PC-3 (cell line): ENCODE measurements at regions of chr21 and their contacts with region 1.

Region 1: DNA sequence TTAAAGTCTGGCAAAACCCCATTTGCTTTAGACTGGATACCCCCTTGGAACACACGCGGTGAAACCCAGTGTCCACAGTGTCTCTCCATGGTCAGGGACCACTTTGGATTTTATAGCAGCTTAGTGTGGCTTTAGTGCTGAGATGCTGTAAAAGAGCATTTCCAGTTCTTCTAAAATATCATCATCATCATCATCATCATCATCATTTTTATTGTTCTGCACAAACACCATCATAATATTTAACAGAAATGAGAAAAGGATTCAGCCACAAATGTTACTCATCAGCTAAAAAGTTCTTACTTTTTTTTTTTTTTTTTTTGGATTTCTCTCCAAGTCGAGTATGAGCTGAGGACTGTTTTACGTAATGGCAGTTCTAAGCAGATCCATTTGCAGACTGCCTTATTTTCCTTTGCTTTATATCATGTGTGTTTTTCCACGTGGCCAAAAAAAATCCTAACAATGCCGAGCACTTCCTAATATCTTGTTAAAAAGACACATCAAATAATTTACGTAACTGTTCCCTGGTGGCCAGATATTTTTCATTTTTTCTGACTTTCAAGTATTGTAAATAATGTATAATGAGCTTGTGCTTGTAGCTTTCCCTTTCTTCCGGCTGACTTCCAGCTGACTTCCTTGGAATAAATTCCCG is 62.8 kb downstream of the EVA1C start:
- DNase-seq: peak; percentile 52
- ATAC-seq: peak; percentile 52
- H3K4me3 ChIP-seq: peak overlapping the region; percentile 25; the same call in 1 of the 2 replicates
- H3K27ac ChIP-seq: peak overlapping the region; percentile 41
- H3K4me1 ChIP-seq: peaks cover 38% of the 10 kb centered on the region
- H3K27me3 ChIP-seq: no peaks in the 10 kb centered on the region
- CTCF ChIP-seq: no peak

Region 2: DNA sequence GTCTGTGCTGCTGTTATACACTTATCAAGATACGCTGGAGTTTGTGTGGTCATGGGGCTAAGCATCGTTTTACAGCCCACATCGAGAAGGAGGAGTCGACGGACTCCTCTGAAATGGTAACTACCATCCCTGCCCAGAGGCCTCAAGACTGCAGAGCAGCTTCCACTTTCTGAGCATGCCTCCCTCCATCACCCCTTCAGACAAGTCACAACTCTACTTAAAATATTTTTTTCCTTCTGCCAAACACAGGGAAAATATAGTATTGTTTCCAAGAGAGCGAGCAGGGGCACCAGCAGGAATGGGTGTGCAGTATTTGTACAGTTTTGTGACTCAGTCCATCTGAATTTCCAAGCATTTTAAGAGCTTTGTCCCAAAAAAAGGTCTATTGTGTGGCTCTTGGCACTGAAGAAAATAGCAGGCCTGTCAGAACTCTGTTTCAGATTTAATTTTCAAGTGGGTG is 48.7 kb before region 1 on chr21:
- CTCF ChIA-PET with region 1: interaction called, 3 read pairs
- POLR2A ChIA-PET with region 1: interaction called, 9 read pairs
- intact Hi-C with region 1: loop called (anchors 2 kb)
- DNase-seq: peak; percentile 86
- ATAC-seq: peak; percentile 81
- H3K4me3 ChIP-seq: peak overlapping the region; percentile 43
- H3K27ac ChIP-seq: peak overlapping the region; percentile 87
- H3K4me1 ChIP-seq: peaks cover 59% of the 10 kb centered on the region
- H3K27me3 ChIP-seq: no peaks in the 10 kb centered on the region
- CTCF ChIP-seq: no peak

Region 3: DNA sequence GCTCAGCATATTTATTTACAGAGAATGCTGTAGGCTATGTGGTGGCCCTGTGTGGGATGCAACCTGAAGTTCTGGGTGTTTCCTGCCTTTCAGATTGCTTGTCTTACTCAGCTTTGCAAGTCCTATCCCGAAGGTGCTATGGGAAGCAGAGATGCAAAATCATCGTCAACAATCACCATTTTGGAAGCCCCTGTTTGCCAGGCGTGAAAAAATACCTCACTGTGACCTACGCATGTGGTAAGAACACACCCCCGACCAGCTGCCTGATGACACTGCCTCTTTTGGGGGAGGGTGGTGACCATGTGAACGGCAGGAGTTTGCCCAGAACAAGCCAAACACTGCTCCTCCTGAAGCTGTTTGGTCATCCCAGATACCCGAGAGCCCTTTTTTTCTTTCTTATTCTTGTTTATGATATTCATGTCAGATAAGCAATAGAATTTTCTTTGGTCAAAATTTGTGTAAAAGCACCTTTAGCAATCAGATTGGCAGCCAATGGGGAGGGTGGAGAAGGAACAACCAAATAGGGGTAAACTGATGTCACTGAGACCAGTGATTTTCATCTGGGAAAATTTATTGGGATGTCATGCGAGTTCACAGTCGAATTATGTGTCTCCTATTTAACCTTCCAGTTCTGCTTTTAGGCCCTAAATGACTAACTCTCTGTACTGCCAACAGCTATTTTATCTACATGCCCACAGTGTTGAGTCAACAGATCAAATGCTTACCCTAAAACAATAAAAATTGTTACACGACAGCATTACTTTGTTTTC is 19.8 kb after region 1 on chr21:
- CTCF ChIA-PET with region 1: interaction called, 6 read pairs
- POLR2A ChIA-PET with region 1: interaction called, 16 read pairs
- intact Hi-C with region 1: loop called (anchors 2 kb)
- DNase-seq: peak; percentile 89
- ATAC-seq: peak; percentile 96
- H3K4me3 ChIP-seq: peak overlapping the region; percentile 10; the same call in 1 of the 2 replicates
- H3K27ac ChIP-seq: peak overlapping the region; percentile 94
- H3K4me1 ChIP-seq: peaks cover 34% of the 10 kb centered on the region
- H3K27me3 ChIP-seq: no peaks in the 10 kb centered on the region
- CTCF ChIP-seq: no peak

Region 4: DNA sequence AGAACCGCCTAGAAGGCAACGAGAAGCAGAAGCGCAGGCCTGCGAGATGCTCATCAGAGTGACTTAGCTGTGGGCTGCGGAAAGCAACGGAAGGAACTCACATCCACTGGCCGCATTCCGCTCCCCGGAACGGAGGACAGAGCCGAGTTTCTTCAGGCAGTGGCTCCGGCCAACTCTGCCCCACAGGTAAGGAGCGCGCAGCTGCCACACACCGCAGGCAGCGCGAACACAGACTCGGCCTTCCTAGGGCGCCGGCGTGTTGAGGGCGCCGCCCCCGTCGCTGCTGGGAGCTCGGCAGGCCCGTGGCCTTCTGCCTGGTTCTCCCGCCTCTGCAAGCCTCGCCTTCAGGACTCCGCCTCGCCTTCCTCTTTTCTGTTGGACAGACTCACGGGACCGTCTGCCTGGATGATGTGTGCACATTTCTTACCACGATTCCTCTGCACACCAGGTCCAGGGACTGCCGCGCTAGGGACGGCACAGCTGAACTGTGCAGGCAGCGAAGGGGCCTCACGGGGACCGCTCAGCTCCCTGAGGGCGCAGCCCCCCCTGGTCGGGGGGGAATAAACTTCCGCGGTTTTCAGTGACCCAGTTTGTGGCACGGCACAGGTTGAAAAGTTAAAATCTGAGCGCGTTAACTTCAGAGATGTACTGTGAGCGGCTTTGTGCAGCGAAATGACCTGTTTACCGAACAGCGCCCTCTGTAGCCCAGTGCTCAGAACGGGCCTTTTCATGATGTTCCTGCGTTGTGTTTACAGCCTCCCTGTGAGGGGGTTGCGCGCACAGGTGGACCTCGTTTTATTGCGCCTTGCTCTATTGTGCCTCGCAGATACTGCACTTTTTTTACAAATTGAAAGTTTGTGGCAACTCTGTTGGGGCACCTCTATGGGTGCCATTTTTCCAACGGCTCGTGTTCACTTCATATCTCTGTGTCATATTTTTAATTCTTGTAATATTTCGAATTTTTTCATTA is 94.3 kb after region 1 on chr21:
- CTCF ChIA-PET with region 1: interaction called, 4 read pairs
- POLR2A ChIA-PET with region 1: interaction called, 11 read pairs
- intact Hi-C with region 1: loop called (anchors 5 kb)
- DNase-seq: peak; percentile 88
- ATAC-seq: peak; percentile 94
- H3K4me3 ChIP-seq: peak overlapping the region; percentile 81
- H3K27ac ChIP-seq: peak overlapping the region; percentile 85
- H3K4me1 ChIP-seq: peaks cover 11% of the 10 kb centered on the region
- H3K27me3 ChIP-seq: no peaks in the 10 kb centered on the region
- CTCF ChIP-seq: peak; percentile 91